SK-N-SH (cell line): ENCODE measurements at regions of chr16 and their contacts with region 1.

Region 1: GRCh38 chr16:29719063-29719462 is 26.7 kb downstream of the C16orf54 start:
- DNase-seq: no peak
- H3K4me3 ChIP-seq: no peak overlapping the region
- H3K27ac ChIP-seq: no peak overlapping the region
- H3K4me1 ChIP-seq: no peaks in the 10 kb centered on the region
- H3K27me3 ChIP-seq: no peaks in the 10 kb centered on the region
- CTCF ChIP-seq: no peak
- EP300 ChIP-seq: no peak
- RAD21 ChIP-seq: no peak

Region 2: DNA sequence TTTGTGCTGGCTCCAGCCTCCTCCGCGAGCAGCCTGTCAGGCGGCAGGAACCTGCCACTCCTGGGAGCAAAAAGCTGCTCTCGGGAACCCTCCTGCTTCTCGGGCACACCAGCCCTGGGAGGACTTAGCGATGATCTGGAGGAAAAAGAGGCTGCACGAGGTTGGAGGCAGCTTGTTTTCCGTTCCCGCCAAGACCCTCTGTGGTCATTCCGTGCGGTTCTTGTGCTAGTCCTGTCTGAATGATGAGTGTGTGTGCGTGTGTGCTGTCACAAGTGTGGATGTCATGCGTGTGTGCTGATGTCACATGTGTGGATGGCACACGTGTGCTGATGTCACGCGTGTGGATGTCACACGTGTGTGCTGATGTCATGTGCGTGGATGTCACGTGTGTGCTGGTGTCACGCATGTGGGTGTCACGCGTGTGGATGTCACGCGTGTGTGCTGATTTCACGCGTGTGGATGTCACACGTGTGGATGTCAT is 462.5 kb before region 1 on chr16:
- CTCF ChIA-PET with region 1: no interaction called
- POLR2A ChIA-PET with region 1: no interaction called
- DNase-seq: no peak
- H3K4me3 ChIP-seq: no peak overlapping the region
- H3K27ac ChIP-seq: peak overlapping the region in 1 of 2 experiments; percentile 29; a peak in 1 of 4 replicates
- H3K4me1 ChIP-seq: peaks cover 8 to 39% of the 10 kb centered on the region in 2 experiments; a peak in 3 of 4 replicates
- H3K27me3 ChIP-seq: no peaks in the 10 kb centered on the region
- CTCF ChIP-seq: no peak
- EP300 ChIP-seq: no peak
- RAD21 ChIP-seq: no peak

Region 3: DNA sequence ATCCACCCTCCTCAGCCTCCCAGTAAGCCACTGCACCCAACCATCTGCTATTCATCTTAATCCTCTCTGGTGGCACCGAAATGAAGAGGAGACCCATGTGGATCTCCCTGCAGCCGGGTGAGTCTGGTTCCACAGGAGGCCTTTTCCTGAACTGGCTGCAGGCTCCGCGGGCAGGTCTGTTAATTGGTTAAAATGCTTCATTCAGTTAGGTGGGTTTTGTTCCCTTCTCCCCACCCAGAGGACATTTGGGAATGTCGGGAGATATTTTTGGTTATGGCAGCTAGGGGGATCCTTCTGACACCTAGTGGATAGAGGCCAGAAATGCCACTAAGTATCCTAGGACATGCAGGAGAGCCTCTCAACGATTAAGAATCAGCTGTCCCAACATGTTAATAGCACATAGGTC is 10.1 kb after region 1 on chr16:
- CTCF ChIA-PET with region 1: interaction called, 17 read pairs
- POLR2A ChIA-PET with region 1: no interaction called
- DNase-seq: peak; percentile 71
- H3K4me3 ChIP-seq: no peak overlapping the region; a peak in 1 of 4 replicates
- H3K27ac ChIP-seq: no peak overlapping the region
- H3K4me1 ChIP-seq: no peaks in the 10 kb centered on the region; a peak in 1 of 4 replicates
- H3K27me3 ChIP-seq: peaks cover 7% of the 10 kb centered on the region
- CTCF ChIP-seq: peak; percentile 71
- EP300 ChIP-seq: no peak
- RAD21 ChIP-seq: peak; percentile 72

Region 4: GRCh38 chr16:29877266-29877961 is 158.4 kb after region 1 on chr16:
- CTCF ChIA-PET with region 1: no interaction called
- POLR2A ChIA-PET with region 1: no interaction called
- DNase-seq: peak; percentile 78
- H3K4me3 ChIP-seq: no peak overlapping the region
- H3K27ac ChIP-seq: no peak overlapping the region
- H3K4me1 ChIP-seq: no peaks in the 10 kb centered on the region
- H3K27me3 ChIP-seq: no peaks in the 10 kb centered on the region
- CTCF ChIP-seq: no peak
- EP300 ChIP-seq: no peak
- RAD21 ChIP-seq: no peak